Left lung (tissue), 14 donors: ENCODE measurements at regions of chr17 and their contacts with region 1.

Region 1: GRCh38 chr17:50681263-50682210 is 26.2 kb downstream of the ANKRD40 start:
- DNase-seq: peak in 2 of 4 donors; percentile 60 to 81
- ATAC-seq: peak; percentile 64
- H3K4me3 ChIP-seq: no peak overlapping the region
- H3K27ac ChIP-seq: peak overlapping the region in 1 of 2 donors; percentile 33
- H3K4me1 ChIP-seq: peaks cover 5 to 12% of the 10 kb centered on the region in 2 donors
- H3K27me3 ChIP-seq: peaks cover 0 to 8% of the 10 kb centered on the region in 2 donors
- CTCF ChIP-seq: peak; percentile 24 to 35

Region 2: DNA sequence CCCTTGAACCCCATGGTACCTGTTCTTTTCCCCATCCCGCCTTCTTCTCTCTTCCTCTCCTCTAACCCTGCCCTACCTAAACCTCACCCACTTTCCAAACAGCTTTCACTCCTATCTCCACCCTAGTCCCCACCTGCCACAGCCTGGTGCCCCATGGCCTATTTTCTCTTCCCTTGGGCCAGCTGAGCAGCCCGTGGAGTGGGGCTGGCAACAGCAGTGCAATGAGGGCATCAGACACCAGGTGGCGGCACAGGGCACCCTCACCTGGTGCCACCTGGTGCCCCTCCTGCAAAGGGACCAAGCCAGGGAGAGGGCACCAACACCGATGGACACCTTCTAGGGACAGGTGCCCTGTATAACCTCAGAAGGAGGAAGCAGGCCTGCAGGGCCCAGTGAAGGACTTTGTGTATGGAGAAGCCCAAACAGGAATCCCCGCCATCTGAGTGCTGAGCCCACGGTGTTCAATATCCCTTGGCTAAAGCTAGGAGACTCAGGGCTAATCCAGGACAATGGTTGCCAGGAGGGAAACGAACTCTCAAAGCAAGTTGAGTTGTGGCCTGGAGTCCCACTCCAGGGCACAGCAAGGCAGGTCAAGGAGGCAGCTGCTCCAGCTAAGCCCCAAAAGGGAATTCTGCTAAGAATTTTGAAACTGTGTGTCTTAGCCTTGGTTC is 50.9 kb before region 1 on chr17:
- intact Hi-C with region 1: loop called in 1 of 2 experiments (anchors 10 kb)
- DNase-seq: peak in 2 of 4 donors; percentile 54 to 89
- ATAC-seq: peak; percentile 70
- H3K4me3 ChIP-seq: no peak overlapping the region
- H3K27ac ChIP-seq: no peak overlapping the region
- H3K4me1 ChIP-seq: peaks cover 13 to 22% of the 10 kb centered on the region in 2 donors
- H3K27me3 ChIP-seq: peaks cover 0 to 91% of the 10 kb centered on the region in 2 donors
- CTCF ChIP-seq: peak; percentile 54 to 83